Naive thymus-derived CD8-positive, alpha-beta T cell (primary cell): ENCODE measurements at regions of chr1 and their contacts with region 1.

Region 1: DNA sequence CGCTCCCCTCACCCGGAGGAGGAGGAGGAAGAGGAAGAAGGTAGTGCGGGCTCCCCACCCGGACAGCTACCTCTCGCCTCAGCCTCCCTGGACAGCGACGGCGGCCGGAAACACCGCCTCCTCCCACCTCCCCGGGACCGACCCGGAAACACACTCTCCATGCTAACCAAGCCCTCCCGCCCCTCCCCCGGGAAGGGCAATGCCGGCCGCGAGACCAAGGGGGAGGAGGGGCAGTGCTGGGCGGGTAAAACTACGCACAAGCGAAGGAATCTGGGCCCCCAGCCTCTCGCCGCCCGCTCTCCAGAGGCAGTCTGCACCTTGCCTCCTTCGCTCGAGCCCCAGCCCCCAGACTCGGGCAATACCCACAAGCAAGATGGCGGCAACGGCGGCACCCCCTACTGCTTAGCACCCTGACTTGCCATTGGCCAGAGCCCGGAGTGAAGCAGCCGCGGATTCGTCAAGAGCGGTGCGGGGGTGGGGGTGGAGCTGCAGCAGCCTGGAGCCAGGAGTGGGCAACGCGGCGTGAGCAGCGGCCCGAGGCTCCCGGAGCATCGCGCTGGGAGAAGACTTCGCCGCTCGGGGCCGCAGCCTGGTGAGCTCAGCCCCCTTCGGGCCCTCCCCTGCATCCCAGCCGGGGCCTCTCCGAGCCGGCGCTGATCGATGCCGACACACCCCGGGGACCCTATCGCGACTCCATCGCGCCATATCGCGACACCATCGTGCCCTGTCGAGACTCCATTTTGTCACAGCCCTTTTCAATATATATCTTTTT is at the starts of genes KIAA0319L and NCDN:
- DNase-seq: peak; percentile 89 to 97 (median 94)
- ATAC-seq: peak; percentile 89 to 91
- H3K4me3 Mint-ChIP-seq: peak within 1 kb of the TSS; percentile 91 to 99 (median 96)
- H3K27ac Mint-ChIP-seq: peak within 1 kb of the TSS; percentile 89 to 99 (median 97)
- H3K4me1 Mint-ChIP-seq: peaks cover 35 to 60% (median 56%) of the 10 kb centered on the region in 4 donors
- H3K27me3 Mint-ChIP-seq: no peaks in the 10 kb centered on the region
- polyA plus RNA-seq, gene KIAA0319L: 16.0 to 25.2 (median 21.9) TPM
- polyA plus RNA-seq, gene NCDN: 11.7 to 18.1 (median 16.6) TPM

Region 2: GRCh38 chr1:35451125-35451528 is 106.4 kb before region 1 on chr1:
- POLR2A ChIA-PET with region 1: interaction called, 17 read pairs
- DNase-seq: peak; percentile 56 to 83 (median 72)
- ATAC-seq: peak; percentile 93 to 97
- H3K4me3 Mint-ChIP-seq: peak overlapping the region in 9 of 10 donors; percentile 30 to 82 (median 64)
- H3K27ac Mint-ChIP-seq: peak overlapping the region; percentile 70 to 94 (median 84)
- H3K4me1 Mint-ChIP-seq: peaks cover 5 to 36% (median 27%) of the 10 kb centered on the region in 4 donors
- H3K27me3 Mint-ChIP-seq: no peaks in the 10 kb centered on the region

Region 3: DNA sequence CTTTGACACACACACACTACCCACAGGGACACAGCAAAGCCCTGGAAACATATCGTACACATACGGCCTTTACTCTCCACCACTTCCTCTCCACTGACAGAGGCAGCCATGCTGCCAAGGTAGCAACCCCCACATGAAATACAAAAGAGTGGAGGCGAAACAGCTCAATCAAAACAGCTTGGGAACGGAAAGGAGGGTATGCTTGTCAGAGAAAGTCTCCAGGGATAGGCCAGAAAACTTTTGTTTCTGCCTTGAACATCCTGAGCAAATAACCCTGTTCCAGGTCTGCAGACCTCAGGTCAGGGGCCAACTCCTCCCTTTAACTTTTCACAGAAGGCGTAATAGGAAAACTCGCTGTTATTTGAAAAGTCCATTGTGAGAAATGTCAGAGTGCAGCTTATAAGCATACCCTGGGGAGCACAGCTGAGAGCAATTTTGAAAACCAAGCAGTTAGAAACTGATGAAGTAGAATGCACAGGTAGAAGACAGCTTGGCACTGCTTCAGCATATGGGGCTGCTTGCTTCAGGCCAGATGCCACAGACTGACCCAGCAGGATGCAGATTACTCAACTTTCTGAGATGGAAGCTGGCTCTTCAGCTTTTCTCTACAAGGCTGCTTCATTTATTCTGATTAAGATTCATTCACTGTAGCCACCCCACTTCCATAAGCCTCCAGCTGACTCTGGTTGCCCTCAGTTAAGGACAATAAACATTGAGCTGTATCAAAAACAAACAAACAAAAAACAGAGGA is 18.2 kb before region 1 on chr1:
- POLR2A ChIA-PET with region 1: interaction called, 22 read pairs
- DNase-seq: peak in 8 of 10 donors; percentile 22 to 88 (median 70)
- ATAC-seq: peak; percentile 97 to 98
- H3K4me3 Mint-ChIP-seq: peak overlapping the region; percentile 54 to 85 (median 79)
- H3K27ac Mint-ChIP-seq: peak overlapping the region; percentile 84 to 98 (median 96)
- H3K4me1 Mint-ChIP-seq: peaks cover 48 to 89% (median 87%) of the 10 kb centered on the region in 4 donors
- H3K27me3 Mint-ChIP-seq: no peaks in the 10 kb centered on the region

Region 4: DNA sequence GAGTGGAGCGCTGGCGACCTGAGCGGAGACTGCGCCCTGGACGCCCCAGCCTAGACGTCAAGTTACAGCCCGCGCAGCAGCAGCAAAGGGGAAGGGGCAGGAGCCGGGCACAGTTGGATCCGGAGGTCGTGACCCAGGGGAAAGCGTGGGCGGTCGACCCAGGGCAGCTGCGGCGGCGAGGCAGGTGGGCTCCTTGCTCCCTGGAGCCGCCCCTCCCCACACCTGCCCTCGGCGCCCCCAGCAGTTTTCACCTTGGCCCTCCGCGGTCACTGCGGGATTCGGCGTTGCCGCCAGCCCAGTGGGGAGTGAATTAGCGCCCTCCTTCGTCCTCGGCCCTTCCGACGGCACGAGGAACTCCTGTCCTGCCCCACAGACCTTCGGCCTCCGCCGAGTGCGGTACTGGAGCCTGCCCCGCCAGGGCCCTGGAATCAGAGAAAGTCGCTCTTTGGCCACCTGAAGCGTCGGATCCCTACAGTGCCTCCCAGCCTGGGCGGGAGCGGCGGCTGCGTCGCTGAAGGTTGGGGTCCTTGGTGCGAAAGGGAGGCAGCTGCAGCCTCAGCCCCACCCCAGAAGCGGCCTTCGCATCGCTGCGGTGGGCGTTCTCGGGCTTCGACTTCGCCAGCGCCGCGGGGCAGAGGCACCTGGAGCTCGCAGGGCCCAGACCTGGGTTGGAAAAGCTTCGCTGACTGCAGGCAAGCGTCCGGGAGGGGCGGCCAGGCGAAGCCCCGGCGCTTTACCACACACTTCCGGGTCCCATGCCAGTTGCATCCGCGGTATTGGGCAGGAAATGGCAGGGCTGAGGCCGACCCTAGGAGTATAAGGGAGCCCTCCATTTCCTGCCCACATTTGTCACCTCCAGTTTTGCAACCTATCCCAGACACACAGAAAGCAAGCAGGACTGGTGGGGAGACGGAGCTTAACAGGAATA is 19.9 kb after region 1 on chr1:
- POLR2A ChIA-PET with region 1: interaction called, 14 read pairs
- DNase-seq: peak; percentile 31 to 79 (median 60)
- ATAC-seq: peak; percentile 86
- H3K4me3 Mint-ChIP-seq: peak overlapping the region; percentile 78 to 96 (median 91)
- H3K27ac Mint-ChIP-seq: peak overlapping the region; percentile 54 to 91 (median 84)
- H3K4me1 Mint-ChIP-seq: peaks cover 17 to 37% (median 26%) of the 10 kb centered on the region in 4 donors
- H3K27me3 Mint-ChIP-seq: no peaks in the 10 kb centered on the region

Region 5: DNA sequence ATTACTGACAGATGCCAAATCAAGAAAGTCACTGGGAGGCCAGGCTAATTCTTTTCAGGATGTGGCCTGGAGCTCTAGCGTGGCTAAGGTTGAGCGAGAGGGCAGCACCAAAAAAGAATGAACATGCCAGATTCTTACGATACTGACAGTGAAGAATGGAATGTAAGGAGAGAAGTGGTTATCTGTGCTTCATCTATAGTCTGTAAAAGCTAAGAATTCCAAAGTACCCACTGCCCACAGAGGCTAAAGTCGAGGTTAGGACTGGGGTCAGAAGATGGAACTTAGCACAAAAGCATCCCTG is 48.4 kb after region 1 on chr1:
- POLR2A ChIA-PET with region 1: no interaction called
- DNase-seq: no peak
- ATAC-seq: no peak
- H3K4me3 Mint-ChIP-seq: no peak overlapping the region
- H3K27ac Mint-ChIP-seq: peak overlapping the region in 4 of 10 donors; percentile 24 to 76 (median 29)
- H3K4me1 Mint-ChIP-seq: peaks cover 6 to 15% (median 7%) of the 10 kb centered on the region in 4 donors
- H3K27me3 Mint-ChIP-seq: no peaks in the 10 kb centered on the region

Region 6: DNA sequence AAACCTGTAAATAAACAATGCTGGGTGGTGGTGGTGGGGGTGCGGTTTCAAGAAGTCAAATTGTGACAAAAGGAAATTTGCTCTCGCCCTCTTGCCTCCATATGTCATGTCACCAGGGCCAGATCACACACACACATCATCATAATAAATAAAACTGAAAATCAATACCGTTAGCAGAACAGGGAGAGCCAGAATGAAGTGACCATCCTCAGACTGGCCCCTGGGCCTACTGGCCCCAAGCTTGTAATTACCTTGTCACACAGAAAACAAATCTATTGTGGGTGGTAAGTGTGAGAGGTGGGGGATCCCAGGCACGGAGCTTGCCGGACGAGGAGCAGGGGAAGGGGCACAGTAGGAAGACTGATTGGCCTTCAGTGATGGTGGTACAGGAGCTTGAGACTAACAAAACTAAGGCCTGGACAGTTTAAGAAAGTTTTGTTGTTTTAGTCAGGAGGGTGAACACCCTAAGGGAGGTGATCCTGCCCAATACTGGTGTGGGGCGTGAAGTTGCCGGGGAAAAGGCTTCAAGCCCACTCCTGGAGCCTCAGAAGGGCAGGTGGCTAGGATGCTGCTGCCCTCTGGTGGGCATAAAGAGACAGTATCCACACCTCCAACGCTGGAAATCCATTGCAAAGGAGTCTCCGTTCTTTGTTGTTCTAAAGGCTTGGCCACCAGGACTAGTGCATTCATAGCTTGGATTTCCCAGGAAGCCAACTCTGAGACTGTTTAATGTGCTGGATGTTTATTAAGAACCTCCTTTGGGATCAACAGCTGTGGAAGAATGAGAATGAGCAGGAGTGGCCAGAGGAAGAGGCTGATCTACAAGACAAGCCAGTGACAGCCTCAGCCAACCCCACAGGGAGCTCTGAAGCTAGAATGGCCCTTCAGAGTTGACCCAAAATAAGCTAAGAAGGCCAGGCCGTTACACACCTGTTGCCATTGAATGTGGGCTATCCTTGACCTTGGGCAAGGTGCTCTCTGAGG is 169.3 kb after region 1 on chr1:
- POLR2A ChIA-PET with region 1: no interaction called
- DNase-seq: peak; percentile 22 to 72 (median 46)
- ATAC-seq: peak; percentile 84 to 98
- H3K4me3 Mint-ChIP-seq: no peak overlapping the region
- H3K27ac Mint-ChIP-seq: peak overlapping the region in 1 of 10 donors; percentile 3
- H3K4me1 Mint-ChIP-seq: peaks cover 1 to 6% (median 3%) of the 10 kb centered on the region in 4 donors
- H3K27me3 Mint-ChIP-seq: peaks cover 0 to 13% (median 1%) of the 10 kb centered on the region in 5 donors